ENCODE measurements at regions of chr11 and their contacts with region 1.

Region 1: GRCh38 chr11:71453037-71453898 is at the start of gene NADSYN1:
- DNase-seq: peak; percentile 87 to 93 (median 88)
- H3K4me3 ChIP-seq: peak within 1 kb of the TSS; percentile 95 to 98
- H3K4me3 Mint-ChIP-seq: peak within 1 kb of the TSS; percentile 88 to 98 (median 94)
- H3K27ac ChIP-seq: peak within 1 kb of the TSS; percentile 89
- H3K27ac Mint-ChIP-seq: peak within 1 kb of the TSS; percentile 86 to 100 (median 98)
- H3K4me1 ChIP-seq: peaks cover 51% of the 10 kb centered on the region
- H3K4me1 Mint-ChIP-seq: peaks cover 42 to 68% (median 55%) of the 10 kb centered on the region in 4 donors
- H3K27me3 ChIP-seq: no peaks in the 10 kb centered on the region
- H3K27me3 Mint-ChIP-seq: no peaks in the 10 kb centered on the region
- total RNA-seq, gene NADSYN1: 233 to 243 TPM

Region 2: GRCh38 chr11:70202898-70203748 is 1250.1 kb before region 1 on chr11 and contains the start of gene FADD:
- CTCF ChIA-PET with region 1: no interaction called
- POLR2A ChIA-PET with region 1: interaction called, 3 read pairs
- intact Hi-C with region 1: loop called (anchors 5 kb)
- DNase-seq: peak; percentile 90 to 92 (median 90)
- H3K4me3 ChIP-seq: peak within 1 kb of the TSS; percentile 90 to 100
- H3K4me3 Mint-ChIP-seq: peak within 1 kb of the TSS; percentile 91 to 97 (median 96)
- H3K27ac ChIP-seq: peak within 1 kb of the TSS; percentile 95
- H3K27ac Mint-ChIP-seq: peak within 1 kb of the TSS; percentile 95 to 100 (median 98)
- H3K4me1 ChIP-seq: peaks cover 48% of the 10 kb centered on the region
- H3K4me1 Mint-ChIP-seq: peaks cover 24 to 51% (median 36%) of the 10 kb centered on the region in 4 donors
- H3K27me3 ChIP-seq: no peaks in the 10 kb centered on the region
- H3K27me3 Mint-ChIP-seq: no peaks in the 10 kb centered on the region
- total RNA-seq, gene FADD: 43.6 to 48.0 TPM

Region 3: GRCh38 chr11:70816156-70816678 is 637.1 kb before region 1 on chr11:
- CTCF ChIA-PET with region 1: interaction called, 10 read pairs
- POLR2A ChIA-PET with region 1: no interaction called
- intact Hi-C with region 1: no loop called
- DNase-seq: no peak
- H3K4me3 ChIP-seq: no peak overlapping the region
- H3K4me3 Mint-ChIP-seq: no peak overlapping the region
- H3K27ac ChIP-seq: no peak overlapping the region
- H3K27ac Mint-ChIP-seq: no peak overlapping the region
- H3K4me1 ChIP-seq: no peaks in the 10 kb centered on the region
- H3K4me1 Mint-ChIP-seq: no peaks in the 10 kb centered on the region
- H3K27me3 ChIP-seq: no peaks in the 10 kb centered on the region
- H3K27me3 Mint-ChIP-seq: peaks cover 3 to 5% of the 10 kb centered on the region in 2 donors

Region 4: DNA sequence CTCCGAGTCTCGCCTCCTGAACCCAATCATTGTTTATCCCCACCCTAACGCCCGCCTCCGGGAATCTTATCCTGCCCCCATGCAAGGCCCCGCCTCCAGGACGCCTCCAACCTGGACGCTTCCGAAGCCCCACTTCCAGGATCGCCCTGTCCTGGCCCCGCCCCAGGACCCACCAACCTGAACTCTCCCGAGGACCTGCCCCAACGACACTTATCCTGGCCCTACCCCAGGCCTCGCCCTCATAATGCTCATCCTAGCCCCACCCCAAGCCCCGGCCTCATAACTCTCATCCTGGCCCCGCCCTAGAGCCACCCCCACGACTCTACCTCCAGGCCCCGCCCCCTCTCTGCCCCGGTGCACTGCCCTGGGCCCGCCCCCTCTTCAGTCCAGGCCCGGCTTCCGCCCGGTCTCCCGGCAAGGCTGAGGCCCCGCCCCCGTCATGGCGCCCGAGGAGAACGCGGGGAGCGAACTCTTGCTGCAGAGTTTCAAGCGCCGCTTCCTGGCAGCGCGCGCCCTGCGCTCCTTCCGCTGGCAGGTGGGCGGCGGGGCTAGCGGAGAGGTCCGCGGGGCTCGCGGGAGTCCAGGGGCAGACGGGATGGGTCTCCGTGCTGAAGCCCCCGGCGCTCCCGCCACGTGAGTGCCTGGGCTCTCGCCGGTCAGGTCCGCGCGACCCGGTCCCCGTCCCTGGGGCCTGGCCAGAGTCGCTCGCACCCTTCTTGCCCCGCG is 334.0 kb after region 1 on chr11:
- CTCF ChIA-PET with region 1: no interaction called
- POLR2A ChIA-PET with region 1: interaction called, 3 read pairs
- intact Hi-C with region 1: loop called (anchors 2 kb)
- DNase-seq: peak; percentile 89 to 97 (median 95)
- H3K4me3 ChIP-seq: peak overlapping the region in 1 of 2 donors; percentile 91
- H3K4me3 Mint-ChIP-seq: peak overlapping the region; percentile 93 to 99 (median 96)
- H3K27ac ChIP-seq: peak overlapping the region; percentile 65
- H3K27ac Mint-ChIP-seq: peak overlapping the region; percentile 87 to 100 (median 99)
- H3K4me1 ChIP-seq: peaks cover 3% of the 10 kb centered on the region
- H3K4me1 Mint-ChIP-seq: peaks cover 10 to 18% (median 13%) of the 10 kb centered on the region in 4 donors
- H3K27me3 ChIP-seq: no peaks in the 10 kb centered on the region
- H3K27me3 Mint-ChIP-seq: no peaks in the 10 kb centered on the region

Region 5: GRCh38 chr11:72015511-72016171 is 562.4 kb after region 1 on chr11:
- CTCF ChIA-PET with region 1: no interaction called
- POLR2A ChIA-PET with region 1: no interaction called
- intact Hi-C with region 1: no loop called
- DNase-seq: no peak
- H3K4me3 ChIP-seq: no peak overlapping the region
- H3K4me3 Mint-ChIP-seq: no peak overlapping the region
- H3K27ac ChIP-seq: no peak overlapping the region
- H3K27ac Mint-ChIP-seq: peak overlapping the region in 2 of 7 donors; percentile 53 to 65
- H3K4me1 ChIP-seq: no peaks in the 10 kb centered on the region
- H3K4me1 Mint-ChIP-seq: peaks cover 0 to 4% (median 2%) of the 10 kb centered on the region in 4 donors
- H3K27me3 ChIP-seq: no peaks in the 10 kb centered on the region
- H3K27me3 Mint-ChIP-seq: no peaks in the 10 kb centered on the region

Measured in CD4-positive, alpha-beta memory T cell (primary cell).